ENCODE measurements at regions of chr2 and their contacts with region 1.

Region 1: GRCh38 chr2:172465417-172466334 is 38.3 kb downstream of the ITGA6 start:
- DNase-seq: no peak
- ATAC-seq: peak; percentile 75

Region 2: DNA sequence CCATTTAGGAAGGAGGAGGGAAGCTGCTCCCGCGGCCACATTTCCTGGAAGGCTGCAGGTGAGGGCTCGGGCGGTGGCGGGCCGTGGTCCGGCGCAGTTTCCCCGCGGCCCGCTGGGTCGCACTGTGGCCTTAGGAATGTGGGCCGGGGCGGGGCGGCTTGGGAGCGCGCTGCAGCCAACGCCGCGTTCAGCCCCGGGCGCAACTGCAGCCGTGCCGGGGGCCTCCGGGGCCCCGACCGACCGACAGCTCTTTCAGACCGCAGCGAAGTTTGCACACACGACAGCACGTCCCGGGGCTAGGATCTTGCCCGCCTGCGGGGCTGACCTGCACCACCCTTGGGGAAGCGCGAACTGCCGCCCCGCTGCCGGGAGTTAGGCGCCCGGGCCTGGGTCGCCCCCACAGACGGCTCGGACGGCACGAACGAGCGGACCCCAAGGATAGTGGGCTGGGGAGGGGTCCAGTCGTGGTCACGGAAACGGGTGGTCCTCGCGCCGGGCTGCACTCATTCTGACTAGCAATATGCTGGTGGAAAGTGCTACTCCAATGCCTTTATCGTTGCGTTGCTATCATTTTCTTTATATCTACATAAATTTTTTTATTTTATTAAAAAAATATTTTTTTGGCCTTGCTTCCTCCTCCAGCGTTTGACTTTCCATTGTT is 293.0 kb before region 1 on chr2:
- intact Hi-C with region 1: loop called (anchors 1 kb)
- DNase-seq: peak; percentile 88
- ATAC-seq: peak; percentile 99

Region 3: GRCh38 chr2:172273910-172274547 is 191.6 kb before region 1 on chr2:
- intact Hi-C with region 1: loop called (anchors 2 kb)
- DNase-seq: no peak
- ATAC-seq: no peak

Region 4: DNA sequence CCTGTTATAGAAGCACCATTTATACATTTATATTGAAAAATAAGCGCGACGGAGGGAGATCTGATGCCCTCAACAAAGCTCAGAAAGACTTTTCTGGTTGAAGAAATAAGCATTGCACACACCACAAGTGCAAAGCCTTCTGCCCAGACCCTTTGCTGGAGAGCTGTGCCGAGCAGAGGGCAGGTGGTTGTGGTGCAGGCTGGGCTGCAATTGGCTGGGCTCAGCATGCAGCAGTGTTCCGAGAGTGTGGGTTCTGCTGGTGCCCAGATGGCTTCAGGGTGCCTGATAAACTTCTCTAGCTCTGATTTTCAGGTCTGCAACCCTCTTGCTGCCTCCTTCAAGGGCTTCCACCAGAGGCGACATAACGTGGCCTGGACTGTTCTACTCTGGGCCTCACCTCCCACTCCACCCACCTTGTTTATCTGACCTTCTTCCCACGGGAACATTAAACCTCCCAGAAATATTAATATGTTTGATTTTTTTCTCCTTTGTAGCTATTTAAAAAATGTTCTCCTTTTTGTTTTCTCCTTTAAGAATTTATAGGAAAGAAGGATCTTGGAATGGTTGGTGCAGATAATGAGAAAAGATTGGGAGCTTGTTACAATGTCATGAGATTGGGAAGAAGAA is 151.8 kb before region 1 on chr2:
- intact Hi-C with region 1: no loop called
- DNase-seq: no peak
- ATAC-seq: no peak

Region 5: GRCh38 chr2:172427256-172427989 is 38.3 kb before region 1 on chr2 and contains the start of gene ITGA6:
- intact Hi-C with region 1: loop called (anchors 2 kb)
- DNase-seq: peak; percentile 85
- ATAC-seq: peak; percentile 84
- total RNA-seq, gene ITGA6: 44.7 TPM

Region 6: DNA sequence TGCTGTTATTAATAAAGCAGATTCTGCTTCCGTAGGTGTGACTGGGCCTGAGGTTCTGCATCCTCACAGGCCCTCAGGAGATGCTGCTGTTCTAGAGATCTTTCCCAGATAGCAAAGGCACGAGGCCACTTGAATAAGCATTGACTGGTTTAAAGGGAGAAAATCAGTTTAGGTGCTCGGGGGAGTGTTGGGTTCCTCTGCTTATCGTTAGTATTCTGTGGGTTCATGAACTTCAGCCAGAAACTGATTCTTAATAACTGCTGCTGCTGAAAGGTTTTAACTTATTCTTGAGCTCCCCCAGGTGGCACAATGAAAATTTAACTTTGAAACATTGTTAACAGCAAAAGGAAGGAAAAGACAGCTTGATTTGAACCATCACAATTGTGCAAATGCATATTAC is 18.6 kb after region 1 on chr2:
- intact Hi-C with region 1: no loop called
- DNase-seq: no peak
- ATAC-seq: no peak

Measured in Right ventricle myocardium inferior (tissue), 1 donor.